Heart right ventricle (tissue), 16 donors: ENCODE measurements at regions of chr20 and their contacts with region 1.

Region 1: DNA sequence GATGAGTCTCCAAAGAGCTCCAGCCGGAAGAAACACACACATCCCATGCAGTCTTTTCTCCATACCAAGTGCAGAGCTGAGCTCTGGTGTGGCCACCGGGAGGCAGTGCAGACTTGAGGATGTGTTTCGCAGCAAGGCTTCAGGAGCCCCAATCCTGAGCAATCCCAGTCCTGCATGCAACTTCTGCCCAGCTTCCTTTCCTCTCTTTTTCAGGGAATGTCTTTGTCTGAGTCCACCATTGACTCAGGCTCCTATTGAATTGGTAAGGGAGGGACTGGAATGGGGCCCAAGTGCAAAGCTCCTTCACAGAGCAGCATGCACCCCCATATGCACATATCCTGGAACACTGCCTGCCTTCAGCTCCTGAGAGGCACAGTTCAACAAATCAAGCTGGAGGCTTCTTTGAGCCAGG is 50.5 kb upstream of the ASIP start:
- DNase-seq: peak; percentile 40 to 52
- ATAC-seq: peak; percentile 82 to 96 (median 91)
- H3K4me3 ChIP-seq: no peak overlapping the region
- H3K27ac ChIP-seq: no peak overlapping the region
- H3K4me1 ChIP-seq: peaks cover 0 to 9% (median 0%) of the 10 kb centered on the region in 9 donors
- H3K27me3 ChIP-seq: peaks cover 0 to 7% (median 0%) of the 10 kb centered on the region in 7 donors
- CTCF ChIP-seq: peak; percentile 38 to 77 (median 66)

Region 2: DNA sequence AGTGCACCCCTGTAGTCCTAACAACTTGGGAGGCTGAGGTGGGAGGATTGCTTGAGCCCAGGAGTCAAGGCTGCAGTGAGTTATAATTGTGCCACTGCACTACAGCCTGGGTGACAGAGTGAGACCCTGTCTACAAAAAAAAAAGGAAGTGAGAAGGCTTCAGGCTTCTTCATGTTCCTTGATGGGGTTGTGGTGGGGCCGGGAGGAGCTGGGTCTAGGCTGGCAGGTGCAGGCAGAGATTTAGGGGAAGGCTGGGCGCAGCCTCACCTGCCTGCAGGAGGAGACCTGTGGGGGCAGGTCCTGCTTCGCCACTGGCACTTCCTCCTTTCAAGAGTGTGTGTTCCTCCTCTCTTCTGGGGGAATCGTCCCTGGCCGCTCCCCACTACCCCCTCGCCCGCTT is 315.6 kb before region 1 on chr20:
- intact Hi-C with region 1: no loop called
- DNase-seq: no peak
- ATAC-seq: no peak
- H3K4me3 ChIP-seq: no peak overlapping the region
- H3K27ac ChIP-seq: no peak overlapping the region
- H3K4me1 ChIP-seq: no peaks in the 10 kb centered on the region
- H3K27me3 ChIP-seq: no peaks in the 10 kb centered on the region
- CTCF ChIP-seq: no peak

Region 3: DNA sequence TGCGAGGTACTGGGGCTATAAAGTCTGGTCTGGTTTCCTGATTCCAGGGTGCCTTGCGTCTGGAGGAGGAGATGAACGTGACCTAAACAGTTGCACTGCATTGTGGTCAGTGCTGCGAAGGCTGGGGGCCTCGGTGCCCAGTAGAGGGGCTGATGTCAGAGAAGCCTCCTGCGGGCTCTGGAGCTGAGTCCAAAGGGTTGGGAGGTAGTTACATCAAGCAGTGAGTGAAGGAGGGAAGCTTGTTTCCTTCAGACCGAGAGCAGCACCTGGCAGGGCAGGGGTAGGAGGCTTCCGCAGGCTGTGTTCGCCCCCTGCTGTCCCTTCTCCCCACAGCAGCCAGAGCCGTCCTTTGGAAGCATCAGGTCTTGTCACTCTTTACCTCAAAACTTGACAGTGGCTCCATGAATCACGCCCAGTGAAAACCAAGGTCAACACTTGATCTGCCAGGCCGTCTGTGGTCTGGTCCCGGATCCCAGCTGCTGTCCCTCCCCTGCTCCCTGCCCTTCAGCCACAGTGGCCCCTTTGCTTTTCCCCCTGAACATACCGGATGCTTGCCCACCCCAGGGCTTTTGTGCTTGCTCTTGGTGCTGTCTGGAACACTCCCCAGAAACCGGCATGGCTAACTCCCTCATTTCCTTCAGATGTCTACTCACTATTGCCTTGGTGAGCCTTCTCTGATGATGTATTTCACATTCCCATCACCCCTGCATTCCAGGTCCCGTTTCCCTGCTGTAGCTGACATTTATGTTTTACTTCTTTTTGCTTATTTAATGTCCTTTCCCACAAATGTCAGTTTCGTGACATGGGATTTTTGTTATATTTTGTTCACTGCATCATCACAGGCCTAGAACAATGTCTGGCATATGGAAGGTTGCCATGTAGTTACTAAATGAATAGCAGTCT is 332.5 kb after region 1 on chr20:
- intact Hi-C with region 1: loop called in 1 of 10 experiments (anchors 5 kb)
- DNase-seq: no peak
- ATAC-seq: peak in 7 of 8 donors; percentile 12 to 57 (median 36)
- H3K4me3 ChIP-seq: no peak overlapping the region
- H3K27ac ChIP-seq: peak overlapping the region in 6 of 10 donors; percentile 7 to 57 (median 38)
- H3K4me1 ChIP-seq: peaks cover 13 to 89% (median 60%) of the 10 kb centered on the region in 9 donors
- H3K27me3 ChIP-seq: no peaks in the 10 kb centered on the region
- CTCF ChIP-seq: peak in 8 of 9 donors; percentile 21 to 63 (median 52)